Left cardiac atrium (tissue), 4 donors: ENCODE measurements at regions of chr3 and their contacts with region 1.

Region 1: DNA sequence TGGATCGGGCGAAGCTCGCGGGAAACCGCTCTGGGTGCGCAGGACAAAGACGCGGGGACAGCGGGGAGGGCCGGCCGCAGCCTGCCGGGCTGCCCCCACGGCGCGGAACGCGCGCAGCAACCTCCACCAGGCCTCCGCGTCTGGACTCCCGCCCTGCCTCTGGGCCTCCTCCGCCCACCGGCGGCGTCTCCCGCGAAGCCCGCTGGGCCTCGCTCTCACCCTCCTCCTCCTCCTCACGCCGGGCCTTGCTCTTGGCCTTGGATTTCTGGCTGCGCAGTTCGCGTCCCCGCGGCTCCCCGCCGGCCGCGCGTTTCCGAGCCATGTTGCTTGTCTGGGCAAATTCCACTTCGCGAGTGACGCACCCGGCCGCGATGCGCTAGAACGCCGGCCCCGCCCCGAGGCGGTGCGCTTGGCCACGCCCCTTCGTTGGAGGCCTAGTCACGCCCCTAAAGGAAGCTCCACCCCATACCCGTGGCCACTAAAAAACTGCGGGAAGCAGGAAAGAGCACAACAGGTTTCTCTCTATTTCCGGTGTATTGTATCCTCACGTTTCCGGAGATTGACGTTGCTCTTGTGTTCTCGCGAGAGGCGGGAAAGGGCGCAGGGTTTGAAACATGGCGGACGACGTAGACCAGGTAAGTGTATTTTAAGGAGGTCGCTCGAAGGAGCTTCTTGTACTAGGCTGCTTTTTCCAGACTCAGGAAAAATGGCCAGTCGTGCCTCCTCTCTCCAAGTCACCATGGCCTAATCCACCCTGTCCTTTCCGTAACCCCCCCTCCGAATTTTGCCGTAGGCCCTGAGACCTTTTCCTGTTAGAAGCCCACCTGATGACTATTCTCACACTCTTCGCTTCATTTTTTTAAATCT is at the starts of genes LSM3 and XPC:
- DNase-seq: peak; percentile 97
- ATAC-seq: peak; percentile 100
- total RNA-seq, gene LSM3: 15.8 to 17.5 TPM
- total RNA-seq, gene XPC: 10.6 to 15.0 TPM

Region 2: DNA sequence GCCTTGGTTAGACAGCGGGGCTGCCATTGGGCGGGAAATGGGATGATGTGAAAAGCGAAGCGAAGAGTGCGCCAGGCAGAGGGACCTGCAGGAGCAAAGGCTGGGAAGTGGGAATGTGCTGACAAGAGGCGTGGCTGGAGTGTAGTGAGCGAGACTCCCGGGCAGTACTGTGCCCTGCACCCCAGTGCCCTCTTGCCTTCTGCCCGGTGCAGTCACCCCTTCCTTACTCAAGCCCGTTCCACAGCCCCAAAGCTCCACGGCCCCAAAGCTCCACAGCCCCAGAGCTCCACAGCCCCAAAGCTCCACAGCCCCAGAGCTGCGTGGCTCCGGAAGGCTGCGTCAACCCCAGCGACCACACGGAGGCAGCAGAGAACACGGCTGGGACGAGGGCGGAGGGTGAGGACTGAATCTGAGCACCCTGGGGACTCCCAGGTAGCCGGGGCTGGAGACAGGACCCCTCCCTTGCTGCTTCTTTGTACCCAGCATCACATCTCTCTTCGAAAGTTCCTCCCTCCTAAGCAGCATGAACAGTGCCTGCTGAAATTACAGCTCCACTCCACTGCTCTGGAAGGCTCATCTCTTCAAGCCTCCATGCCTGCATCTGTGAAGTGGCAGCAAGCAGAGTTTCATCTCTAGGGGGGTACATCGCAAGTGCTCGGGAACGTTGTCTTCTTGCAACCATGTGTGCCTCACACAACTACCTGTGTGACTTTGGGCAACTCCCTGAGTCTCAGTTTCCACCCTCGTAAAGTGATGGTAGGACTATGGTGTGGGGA is 520.6 kb before region 1 on chr3:
- intact Hi-C with region 1: loop called in 1 of 2 experiments (anchors 5 kb)
- DNase-seq: peak; percentile 59
- ATAC-seq: peak; percentile 65 to 73

Region 3: DNA sequence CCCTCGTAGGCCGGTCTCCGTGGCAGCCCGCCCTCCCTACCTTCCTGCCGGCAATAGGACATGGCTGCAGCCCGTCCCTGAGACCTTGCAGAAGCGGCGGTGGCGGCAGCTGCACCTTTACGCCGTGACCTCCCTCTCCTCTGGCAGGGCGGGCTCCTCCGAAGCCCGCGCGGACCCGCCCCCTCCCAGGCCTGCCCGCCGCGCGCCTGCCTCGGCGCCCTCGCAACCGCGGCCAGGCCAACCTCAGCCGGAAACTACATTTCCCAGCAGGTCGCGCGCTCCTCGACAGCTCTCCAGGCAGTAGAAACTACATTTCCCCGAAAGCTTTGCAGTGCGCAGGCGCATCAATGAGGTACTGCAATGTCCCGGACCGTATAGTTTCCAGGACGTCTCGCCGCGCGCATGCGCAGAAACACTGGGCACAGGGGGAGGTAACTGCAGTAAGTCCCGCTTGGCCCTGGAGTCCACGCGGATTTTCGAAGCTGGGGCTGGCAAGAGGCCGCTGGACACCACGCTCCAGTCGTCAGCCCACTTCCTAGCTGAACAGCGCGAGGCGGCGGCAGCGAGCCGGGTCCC is 53.8 kb before region 1 on chr3 and contains the starts of genes CHCHD4 and TMEM43:
- intact Hi-C with region 1: loop called in 1 of 2 experiments (anchors 5 kb)
- DNase-seq: peak; percentile 100
- ATAC-seq: peak; percentile 92 to 93
- total RNA-seq, gene CHCHD4: 21.8 to 25.9 TPM
- total RNA-seq, gene TMEM43: 50.1 to 95.3 TPM

Region 4: GRCh38 chr3:14133255-14133701 is 45.2 kb before region 1 on chr3:
- intact Hi-C with region 1: loop called (anchors 5 kb)
- DNase-seq: no peak
- ATAC-seq: peak in 1 of 2 donors; percentile 66